ENCODE measurements at regions of chr1 and their contacts with region 1.

Region 1: DNA sequence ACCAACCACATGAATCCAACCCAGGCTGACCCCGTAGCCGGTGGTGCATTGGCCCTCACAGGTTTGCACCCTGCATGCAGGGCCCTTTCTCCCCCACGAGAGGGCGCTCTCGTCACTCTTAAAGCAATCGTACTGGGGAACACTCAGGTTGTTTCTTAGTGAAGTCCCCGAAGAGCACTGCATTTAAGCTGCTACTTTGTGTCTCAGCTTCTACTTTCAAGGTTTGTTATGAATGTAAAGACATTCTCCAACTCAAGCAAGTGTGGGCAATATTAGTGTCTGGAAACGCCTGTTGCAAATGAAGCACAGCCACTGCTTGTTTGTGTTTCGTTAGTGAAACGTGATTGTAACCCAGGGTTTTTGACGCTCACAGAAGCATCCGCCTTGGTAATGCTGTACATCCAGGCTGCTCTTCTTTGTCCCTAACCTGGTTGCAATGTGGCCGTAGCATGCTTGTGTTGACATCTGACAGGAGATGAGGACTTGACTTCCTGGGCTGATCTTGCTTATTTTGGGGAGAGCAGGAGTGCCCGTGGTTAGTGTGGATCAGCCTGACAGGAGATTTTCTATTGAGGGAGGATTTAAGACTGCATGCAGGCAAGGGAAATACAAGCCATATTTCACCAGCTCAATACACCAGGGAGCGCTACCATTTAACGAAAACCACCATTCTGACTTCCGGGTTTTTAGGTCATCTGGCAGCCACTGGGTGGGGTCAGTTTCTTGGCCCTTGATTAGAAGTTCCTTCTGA is 79.8 kb downstream of the ST6GALNAC3 start:
- DNase-seq: peak; percentile 50
- ATAC-seq: peak; percentile 96
- H3K4me3 ChIP-seq: no peak overlapping the region
- H3K27ac ChIP-seq: peak overlapping the region; percentile 31
- H3K4me1 ChIP-seq: peaks cover 3 to 33% of the 10 kb centered on the region in 2 experiments; a peak in 3 of 4 replicates
- H3K27me3 ChIP-seq: no peaks in the 10 kb centered on the region
- CTCF ChIP-seq: peak; percentile 76 to 98 (median 96)
- POLR2A ChIP-seq: no peak
- RAD21 ChIP-seq: peak; percentile 95

Region 2: DNA sequence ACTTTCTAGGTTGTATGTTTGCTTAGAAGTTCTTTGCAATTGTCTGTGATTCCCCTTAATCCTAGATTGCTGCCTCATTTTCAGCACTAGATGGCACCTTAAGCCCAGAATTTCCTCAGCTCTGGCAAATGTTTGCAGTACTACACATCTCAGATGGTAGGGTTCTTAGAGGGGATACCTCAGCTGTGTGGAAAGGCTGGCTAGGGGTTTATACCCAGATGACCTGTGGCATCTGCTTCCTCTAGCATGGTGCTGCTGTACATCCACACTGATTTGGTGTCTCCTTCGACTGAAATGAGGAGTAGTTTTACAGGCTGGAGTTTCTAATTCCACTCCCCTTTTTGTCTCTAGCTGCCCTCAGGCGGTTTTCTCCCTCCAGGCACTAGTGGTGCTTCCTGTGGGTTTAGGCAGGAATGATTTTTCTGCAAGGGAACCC is 245.6 kb before region 1 on chr1:
- CTCF ChIA-PET with region 1: interaction called, 6 read pairs
- POLR2A ChIA-PET with region 1: no interaction called
- RAD21 ChIA-PET with region 1: no interaction called
- intact Hi-C with region 1: loop called (anchors 1 kb)
- DNase-seq: peak; percentile 40
- ATAC-seq: peak; percentile 95
- H3K4me3 ChIP-seq: no peak overlapping the region
- H3K27ac ChIP-seq: no peak overlapping the region
- H3K4me1 ChIP-seq: no peaks in the 10 kb centered on the region
- H3K27me3 ChIP-seq: no peaks in the 10 kb centered on the region
- CTCF ChIP-seq: peak; percentile 44 to 71 (median 61); a peak in 5 of 6 replicates
- POLR2A ChIP-seq: no peak
- RAD21 ChIP-seq: peak; percentile 86

Region 3: DNA sequence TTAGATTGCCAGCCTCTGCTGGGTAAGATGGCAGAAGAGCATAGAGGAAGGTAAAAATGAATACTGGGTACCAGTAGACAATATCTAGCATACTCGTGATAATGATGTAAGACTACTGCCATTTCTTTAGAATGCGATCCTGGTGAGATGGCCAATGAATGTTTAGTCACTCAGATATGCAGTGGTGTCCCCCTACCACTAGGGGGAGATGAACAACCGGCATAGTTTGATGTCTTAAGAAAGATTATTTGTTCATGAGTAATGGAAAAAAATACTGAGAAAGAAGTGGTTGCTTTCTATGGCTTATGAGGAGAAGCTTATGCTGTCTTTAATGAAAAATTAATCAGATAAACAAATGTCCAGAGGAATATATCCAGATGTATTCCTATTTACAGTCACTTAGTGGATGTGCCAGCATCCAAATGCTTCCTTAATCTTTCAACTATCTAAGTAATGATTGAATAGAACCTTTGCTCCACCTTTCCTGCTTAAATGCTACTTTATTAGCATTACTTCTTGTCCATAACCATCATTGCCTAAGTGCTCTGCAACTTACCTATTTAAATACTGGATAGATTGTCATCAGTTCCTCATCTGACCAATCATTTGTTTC is 176.7 kb after region 1 on chr1:
- CTCF ChIA-PET with region 1: no interaction called
- POLR2A ChIA-PET with region 1: no interaction called
- RAD21 ChIA-PET with region 1: no interaction called
- intact Hi-C with region 1: loop called (anchors 10 kb)
- DNase-seq: peak; percentile 63
- ATAC-seq: peak; percentile 82
- H3K4me3 ChIP-seq: no peak overlapping the region
- H3K27ac ChIP-seq: no peak overlapping the region
- H3K4me1 ChIP-seq: peaks cover 0 to 3% of the 10 kb centered on the region in 2 experiments; a peak in 1 of 4 replicates
- H3K27me3 ChIP-seq: no peaks in the 10 kb centered on the region
- CTCF ChIP-seq: peak; percentile 39 to 97 (median 90); a peak in 5 of 6 replicates
- POLR2A ChIP-seq: no peak
- RAD21 ChIP-seq: peak; percentile 73

Region 4: DNA sequence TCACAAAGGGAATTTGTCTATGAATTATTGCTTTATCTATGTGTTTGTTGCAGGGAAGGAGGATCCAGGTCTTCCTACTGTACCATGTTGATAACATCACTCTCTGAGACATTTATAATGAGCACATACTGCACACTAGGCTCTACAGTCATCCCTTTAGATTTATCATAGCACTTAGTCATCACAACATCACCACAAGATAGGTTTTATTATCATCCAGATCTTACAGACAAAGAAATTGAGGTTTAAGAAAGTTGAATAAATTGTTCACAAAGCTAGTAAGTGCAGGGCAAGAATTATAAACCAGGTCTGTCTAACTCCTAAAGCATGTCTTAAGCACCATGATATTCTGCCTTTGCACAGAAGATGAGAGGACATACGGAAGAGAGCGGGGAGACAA is 591.8 kb after region 1 on chr1:
- CTCF ChIA-PET with region 1: no interaction called
- POLR2A ChIA-PET with region 1: no interaction called
- RAD21 ChIA-PET with region 1: no interaction called
- intact Hi-C with region 1: loop called (anchors 2 kb)
- DNase-seq: no peak
- ATAC-seq: no peak
- H3K4me3 ChIP-seq: no peak overlapping the region
- H3K27ac ChIP-seq: no peak overlapping the region
- H3K4me1 ChIP-seq: no peaks in the 10 kb centered on the region
- H3K27me3 ChIP-seq: no peaks in the 10 kb centered on the region
- CTCF ChIP-seq: no peak
- POLR2A ChIP-seq: no peak
- RAD21 ChIP-seq: no peak

Region 5: GRCh38 chr1:76901158-76901767 is 746.9 kb after region 1 on chr1:
- CTCF ChIA-PET with region 1: no interaction called
- POLR2A ChIA-PET with region 1: no interaction called
- RAD21 ChIA-PET with region 1: no interaction called
- intact Hi-C with region 1: loop called (anchors 5 kb)
- DNase-seq: peak; percentile 54
- ATAC-seq: peak; percentile 100
- H3K4me3 ChIP-seq: no peak overlapping the region
- H3K27ac ChIP-seq: no peak overlapping the region
- H3K4me1 ChIP-seq: no peaks in the 10 kb centered on the region
- H3K27me3 ChIP-seq: no peaks in the 10 kb centered on the region
- CTCF ChIP-seq: peak; percentile 50 to 90 (median 86); a peak in 5 of 6 replicates
- POLR2A ChIP-seq: no peak
- RAD21 ChIP-seq: peak; percentile 69

Region 6: GRCh38 chr1:77031106-77031662 is 876.8 kb after region 1 on chr1:
- CTCF ChIA-PET with region 1: interaction called, 3 read pairs
- POLR2A ChIA-PET with region 1: no interaction called
- RAD21 ChIA-PET with region 1: no interaction called
- intact Hi-C with region 1: loop called (anchors 10 kb)
- DNase-seq: no peak
- ATAC-seq: peak; percentile 66
- H3K4me3 ChIP-seq: no peak overlapping the region
- H3K27ac ChIP-seq: no peak overlapping the region
- H3K4me1 ChIP-seq: peaks cover 0 to 5% of the 10 kb centered on the region in 2 experiments; a peak in 1 of 4 replicates
- H3K27me3 ChIP-seq: no peaks in the 10 kb centered on the region
- CTCF ChIP-seq: 0 out of 6 replicates have a peak, but pooled peaks of 2 of the 3 experiments have one; percentile 4 to 8
- POLR2A ChIP-seq: no peak
- RAD21 ChIP-seq: peak; percentile 57

Region 7: DNA sequence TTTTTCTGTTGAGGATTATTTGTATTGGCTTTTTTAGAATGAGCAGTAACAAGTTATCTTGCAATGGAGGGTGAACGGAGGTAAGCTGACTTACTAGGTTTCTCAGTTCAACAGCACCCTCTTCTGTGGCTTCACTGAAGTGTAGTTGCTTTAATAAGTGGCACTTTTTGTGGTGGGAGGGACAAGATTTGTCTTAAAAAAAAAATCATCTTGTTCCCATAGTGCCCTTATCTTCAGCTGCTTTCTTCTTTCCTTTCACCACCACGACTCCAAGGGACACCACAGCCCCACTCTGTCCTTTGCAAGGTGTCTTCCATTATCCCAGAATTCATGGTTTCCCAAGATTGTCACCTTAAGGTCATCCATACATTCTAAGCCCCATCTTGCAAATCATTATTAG is 971.9 kb after region 1 on chr1:
- CTCF ChIA-PET with region 1: interaction called, 22 read pairs
- POLR2A ChIA-PET with region 1: no interaction called
- RAD21 ChIA-PET with region 1: no interaction called
- intact Hi-C with region 1: loop called (anchors 1 kb)
- DNase-seq: peak; percentile 73
- ATAC-seq: peak; percentile 86
- H3K4me3 ChIP-seq: no peak overlapping the region
- H3K27ac ChIP-seq: no peak overlapping the region
- H3K4me1 ChIP-seq: no peaks in the 10 kb centered on the region
- H3K27me3 ChIP-seq: no peaks in the 10 kb centered on the region
- CTCF ChIP-seq: peak; percentile 57 to 76 (median 73); a peak in 5 of 6 replicates
- POLR2A ChIP-seq: no peak
- RAD21 ChIP-seq: peak; percentile 92